Right cardiac atrium (tissue), 5 donors: ENCODE measurements at regions of chr5 and their contacts with region 1.

Region 1: DNA sequence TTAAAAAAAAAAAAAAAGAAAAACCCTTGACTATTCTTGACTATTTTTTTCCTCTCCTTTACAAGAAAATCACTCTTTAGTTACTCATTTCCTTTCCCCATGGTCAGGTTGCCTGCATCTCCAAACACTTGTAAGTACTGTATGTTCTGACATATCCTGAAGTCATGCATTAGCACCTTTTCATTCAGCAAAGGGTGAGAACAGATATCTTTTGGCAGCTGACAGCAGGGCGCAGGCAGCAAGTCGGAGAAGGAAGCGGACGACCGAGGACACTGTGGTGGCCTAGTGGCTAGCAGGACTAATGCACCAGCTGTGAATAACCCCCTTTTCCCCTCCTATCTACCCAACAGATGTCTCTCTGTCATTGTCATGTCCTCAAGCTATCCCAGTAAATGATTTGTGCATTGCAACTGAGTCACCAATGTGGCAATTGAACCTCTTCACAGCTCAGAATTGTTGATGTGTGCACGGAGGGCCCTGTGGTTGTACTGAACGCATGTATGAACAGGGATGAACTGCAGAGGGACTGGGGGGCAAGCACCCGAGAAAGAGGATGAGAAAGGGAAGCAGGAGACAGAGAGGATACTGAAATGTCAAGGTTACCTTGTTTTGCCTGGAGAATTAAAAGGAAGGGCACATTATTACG is 996.0 kb upstream of the ARRDC3 start:
- DNase-seq: peak in 1 of 3 donors; percentile 35
- ATAC-seq: peak in 1 of 2 donors; percentile 67
- H3K4me3 ChIP-seq: no peak overlapping the region
- H3K27ac ChIP-seq: no peak overlapping the region
- H3K4me1 ChIP-seq: peaks cover 2% of the 10 kb centered on the region
- H3K27me3 ChIP-seq: no peaks in the 10 kb centered on the region

Region 2: GRCh38 chr5:92104126-92104525 is 275.0 kb before region 1 on chr5:
- intact Hi-C with region 1: no loop called
- DNase-seq: no peak
- ATAC-seq: no peak
- H3K4me3 ChIP-seq: no peak overlapping the region
- H3K27ac ChIP-seq: no peak overlapping the region
- H3K4me1 ChIP-seq: no peaks in the 10 kb centered on the region
- H3K27me3 ChIP-seq: no peaks in the 10 kb centered on the region

Region 3: GRCh38 chr5:92353107-92354030 is 25.7 kb before region 1 on chr5:
- intact Hi-C with region 1: loop called in 1 of 4 experiments (anchors 2 kb)
- DNase-seq: no peak
- ATAC-seq: no peak
- H3K4me3 ChIP-seq: no peak overlapping the region
- H3K27ac ChIP-seq: no peak overlapping the region
- H3K4me1 ChIP-seq: no peaks in the 10 kb centered on the region
- H3K27me3 ChIP-seq: no peaks in the 10 kb centered on the region